Left cardiac atrium (tissue), 4 donors: ENCODE measurements at regions of chr15 and their contacts with region 1.

Region 1: DNA sequence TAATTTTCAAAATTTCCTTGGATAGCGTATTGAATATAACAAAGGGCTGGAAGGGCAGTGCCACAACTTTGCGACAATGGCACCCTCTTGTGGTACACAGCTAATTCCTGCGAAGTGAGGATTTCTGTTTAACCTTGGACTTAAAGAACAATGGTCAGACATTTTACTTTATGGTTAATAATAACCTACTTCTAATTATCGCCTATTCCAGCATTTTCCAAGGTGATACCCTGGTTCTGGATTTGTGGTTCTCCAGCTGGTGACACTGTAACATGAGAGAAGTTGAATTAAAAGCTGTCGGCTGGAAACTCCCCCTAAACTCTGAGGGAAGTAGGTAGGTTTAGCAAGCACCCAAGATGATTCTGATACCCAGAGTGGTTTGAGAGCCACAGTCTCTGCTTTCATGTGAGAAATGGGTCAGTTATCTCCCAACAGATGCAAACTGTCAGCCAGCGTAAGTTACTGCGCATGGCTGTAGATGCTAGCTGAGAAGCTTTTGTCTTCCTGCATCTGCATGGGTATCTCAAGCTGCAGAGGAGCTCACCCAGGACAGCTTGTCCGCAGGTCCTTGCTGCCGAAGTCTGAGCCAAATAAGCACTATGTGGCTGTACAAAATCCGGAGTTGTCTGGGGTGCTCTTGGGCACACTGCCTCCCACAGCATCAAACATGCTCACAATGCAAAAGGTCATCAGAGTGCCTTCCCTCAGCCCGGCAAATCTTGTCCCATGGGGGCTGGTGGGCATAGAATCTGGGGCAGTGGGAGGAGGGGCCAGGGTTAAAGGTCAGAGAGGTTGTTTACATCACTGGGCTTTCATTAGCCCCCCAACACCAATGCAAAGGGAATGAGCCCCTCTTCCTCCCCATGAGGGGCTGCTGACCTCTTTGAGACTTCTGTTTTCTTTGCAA is 6.6 kb upstream of the CHSY1 start:
- DNase-seq: peak; percentile 63
- ATAC-seq: peak; percentile 64 to 75

Region 2: DNA sequence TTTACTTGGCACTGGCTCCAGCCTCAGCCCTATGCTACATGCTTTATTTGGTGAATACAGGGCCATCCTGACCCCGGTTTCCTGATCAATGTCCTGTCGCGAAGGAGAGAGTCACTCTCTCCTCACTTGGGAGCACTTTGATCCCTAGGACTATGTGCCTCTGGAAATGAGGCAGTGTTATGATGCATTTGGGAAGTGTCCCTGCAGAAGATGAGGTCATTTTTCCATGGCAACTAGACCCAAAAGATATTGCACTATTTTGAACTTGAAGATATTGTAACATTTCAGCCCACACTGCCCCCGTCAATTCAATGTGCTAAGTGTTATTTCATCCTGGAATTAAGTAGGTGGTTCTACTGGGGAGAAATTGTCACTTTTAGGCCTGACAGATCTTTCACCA is 271.3 kb before region 1 on chr15:
- intact Hi-C with region 1: no loop called
- DNase-seq: no peak
- ATAC-seq: peak; percentile 12 to 55

Region 3: DNA sequence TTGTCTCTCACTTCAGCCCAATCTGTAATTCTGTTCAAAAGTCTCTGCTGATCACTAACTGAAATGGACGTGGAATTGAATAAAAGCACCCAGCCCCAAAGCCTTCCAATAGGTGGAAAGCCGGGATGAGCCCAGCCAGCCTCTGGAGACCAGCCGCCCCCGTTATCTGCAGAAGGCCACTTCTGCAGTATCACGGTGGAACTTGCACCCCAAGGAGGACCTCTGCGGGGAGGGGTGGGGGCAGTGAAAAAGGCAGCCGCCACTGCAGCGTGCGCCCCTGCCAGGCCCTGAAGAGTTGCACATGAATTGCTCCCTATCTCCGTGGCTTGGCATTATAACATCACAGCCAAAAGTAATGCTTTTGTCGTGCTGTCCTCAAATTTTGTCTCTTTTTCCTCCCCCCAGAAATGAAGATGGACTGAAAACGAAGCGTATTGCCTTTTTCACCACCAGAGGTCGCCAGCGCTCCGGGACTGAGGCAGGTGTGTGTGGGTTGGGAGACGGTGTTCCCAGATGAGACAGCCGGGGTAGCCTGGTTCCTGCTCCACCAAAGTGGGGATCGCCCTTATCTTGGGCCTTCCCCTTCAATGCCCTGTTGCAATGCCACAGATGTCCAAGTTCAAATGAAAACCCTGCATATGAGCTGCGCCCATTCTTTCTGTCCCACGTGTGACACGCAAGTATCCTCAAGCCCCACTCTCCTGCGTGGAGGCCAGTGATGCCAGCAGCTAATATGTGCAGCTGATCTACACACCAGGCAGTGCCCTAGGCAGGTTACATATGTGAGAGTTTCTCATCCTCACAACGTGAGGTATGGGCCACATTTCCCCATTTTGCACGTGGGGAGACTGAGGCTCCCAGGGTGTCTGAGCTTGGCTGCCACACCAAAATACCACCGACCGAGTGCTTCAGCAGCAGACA is 243.3 kb before region 1 on chr15:
- intact Hi-C with region 1: loop called (anchors 1 to 2 kb)
- DNase-seq: peak; percentile 83
- ATAC-seq: peak; percentile 75 to 76

Region 4: GRCh38 chr15:101088788-101089583 is 169.5 kb before region 1 on chr15:
- intact Hi-C with region 1: loop called (anchors 2 kb)
- DNase-seq: peak; percentile 75
- ATAC-seq: peak; percentile 76 to 81